Activated B cell treated with CpG ODN at 0.5 μM for 24 hours (primary cell): ENCODE measurements at regions of chr1 and their contacts with region 1.

Region 1: DNA sequence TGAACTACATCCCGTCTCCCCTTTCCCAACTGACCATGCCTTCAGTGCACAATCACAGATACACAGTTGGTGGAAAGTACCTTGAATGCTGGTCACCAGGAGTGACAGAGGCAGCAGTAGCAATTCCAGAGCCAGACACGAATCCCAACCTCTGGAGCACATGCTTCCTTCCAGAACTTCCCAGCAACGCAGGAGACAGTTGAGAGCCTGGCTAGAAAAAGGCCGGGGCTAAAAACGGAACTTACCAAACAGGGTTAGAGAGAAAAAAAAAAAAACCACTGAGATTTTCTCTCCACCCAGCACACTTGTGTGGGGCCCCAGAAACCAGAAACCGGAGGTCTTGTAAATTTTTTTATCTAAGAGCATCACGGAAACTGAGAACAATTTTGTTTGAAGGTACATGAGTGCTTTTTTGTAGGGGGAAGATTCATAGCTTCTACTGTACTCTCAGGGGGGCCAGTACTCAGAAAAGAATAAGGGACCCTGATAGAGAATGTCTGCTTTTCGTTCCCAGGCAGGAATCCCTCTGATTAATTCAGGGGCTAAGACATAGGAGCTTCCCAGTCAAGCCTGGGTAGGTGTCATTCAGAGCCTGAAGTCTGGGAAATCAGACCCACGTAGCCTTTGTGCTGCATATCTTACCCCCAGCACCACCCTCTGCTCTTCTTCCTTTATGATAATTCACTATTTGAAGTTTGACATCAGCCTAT is at the start of gene CD48:
- DNase-seq: no peak
- ATAC-seq: peak; percentile 58
- H3K4me3 Mint-ChIP-seq: no peak within 1 kb of the TSS
- H3K27ac Mint-ChIP-seq: no peak within 1 kb of the TSS
- H3K4me1 Mint-ChIP-seq: peaks cover 32% of the 10 kb centered on the region
- H3K27me3 Mint-ChIP-seq: no peaks in the 10 kb centered on the region
- CTCF ChIP-seq: no peak
- total RNA-seq, gene CD48: 200 and 202 TPM in 2 replicates

Region 2: DNA sequence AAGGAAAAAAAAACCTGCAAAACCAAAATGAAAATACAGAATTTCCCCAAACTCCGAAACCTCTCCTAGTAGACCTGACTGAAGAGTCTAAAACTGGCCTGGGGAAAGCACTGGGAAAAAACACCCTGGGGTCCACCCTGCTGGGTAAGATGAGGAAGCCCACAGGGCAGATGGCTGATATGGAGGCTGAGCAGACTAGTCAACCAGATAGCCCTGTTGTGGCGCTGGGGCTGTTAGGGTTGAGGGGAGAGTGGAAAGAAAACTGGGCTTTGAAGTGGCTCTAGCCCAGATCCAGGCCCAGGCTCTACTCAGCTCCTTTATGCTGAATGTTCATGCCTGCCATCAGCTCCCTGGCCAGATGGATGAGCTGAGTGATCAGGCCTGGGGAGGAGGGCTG is 58.1 kb before region 1 on chr1:
- CTCF ChIA-PET with region 1: no interaction called
- POLR2A ChIA-PET with region 1: interaction called, 10 read pairs
- intact Hi-C with region 1: no loop called
- DNase-seq: no peak
- ATAC-seq: peak; percentile 78
- H3K4me3 Mint-ChIP-seq: peak overlapping the region; percentile 65
- H3K27ac Mint-ChIP-seq: peak overlapping the region; percentile 93
- H3K4me1 Mint-ChIP-seq: peaks cover 92% of the 10 kb centered on the region
- H3K27me3 Mint-ChIP-seq: no peaks in the 10 kb centered on the region
- CTCF ChIP-seq: no peak

Region 3: DNA sequence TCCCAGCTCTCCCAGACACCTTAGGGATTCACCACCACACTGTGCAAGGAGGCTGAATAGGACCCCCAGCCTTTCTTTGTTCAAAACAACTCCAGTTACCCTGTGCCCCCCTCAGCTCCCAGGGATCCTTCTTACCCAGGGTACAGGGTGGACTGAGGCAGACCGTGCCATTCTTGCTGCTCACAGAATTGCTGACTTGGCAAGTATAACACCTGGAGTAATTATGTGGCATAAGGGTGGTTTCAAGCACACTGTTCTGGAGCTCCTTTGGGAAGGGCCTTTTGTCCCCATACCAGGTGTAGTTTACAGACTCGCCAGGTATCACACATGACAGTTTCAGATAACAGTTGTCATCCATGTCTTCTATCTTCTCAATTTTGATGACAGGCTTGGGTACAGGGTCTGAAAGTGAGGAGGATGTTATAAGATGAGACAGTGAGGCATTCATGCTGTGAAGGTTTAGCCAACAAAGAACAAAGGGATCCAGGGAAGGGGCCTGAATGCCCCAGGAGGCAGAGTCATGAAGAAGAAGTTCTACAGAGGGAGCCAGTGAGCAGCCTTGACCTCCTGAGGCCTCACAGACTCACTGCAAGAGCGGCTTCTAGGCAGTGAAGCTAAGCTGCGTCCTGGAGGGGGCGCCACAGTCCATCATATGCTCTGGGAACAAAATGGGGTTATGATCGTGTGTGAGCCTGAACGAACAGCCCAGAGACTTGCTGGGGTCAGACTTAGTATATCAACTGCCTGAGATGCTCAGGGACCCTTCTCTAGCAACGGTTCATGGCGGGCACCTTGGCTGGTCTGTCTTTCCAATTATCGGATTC is 30.5 kb before region 1 on chr1:
- CTCF ChIA-PET with region 1: interaction called, 46 read pairs
- POLR2A ChIA-PET with region 1: interaction called, 12 read pairs
- intact Hi-C with region 1: loop called (anchors 5 kb)
- DNase-seq: peak; percentile 67
- ATAC-seq: peak; percentile 89
- H3K4me3 Mint-ChIP-seq: no peak overlapping the region
- H3K27ac Mint-ChIP-seq: peak overlapping the region; percentile 79
- H3K4me1 Mint-ChIP-seq: peaks cover 52% of the 10 kb centered on the region
- H3K27me3 Mint-ChIP-seq: no peaks in the 10 kb centered on the region
- CTCF ChIP-seq: no peak

Region 4: DNA sequence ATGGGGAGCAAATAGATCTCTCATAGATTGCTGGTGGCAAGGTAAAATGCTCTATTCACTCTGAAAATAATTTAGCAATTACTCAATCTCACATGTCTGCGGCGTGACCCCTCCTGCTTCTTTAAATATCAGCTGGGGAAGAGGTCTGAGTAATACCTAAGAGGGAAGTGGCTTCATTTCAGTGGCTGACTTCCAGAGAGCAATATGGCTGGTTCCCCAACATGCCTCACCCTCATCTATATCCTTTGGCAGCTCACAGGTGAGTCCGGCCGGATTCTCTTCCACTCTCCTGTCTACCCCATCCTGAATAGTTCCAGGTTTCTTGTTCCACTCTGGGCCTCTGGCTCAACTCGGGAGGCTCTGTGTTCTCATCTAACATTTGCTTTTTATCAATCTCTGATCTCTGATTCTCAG is 27.3 kb after region 1 on chr1 and contains the start of gene SLAMF7:
- CTCF ChIA-PET with region 1: no interaction called
- POLR2A ChIA-PET with region 1: interaction called, 7 read pairs
- intact Hi-C with region 1: loop called (anchors 2 kb)
- DNase-seq: peak; percentile 32
- ATAC-seq: peak; percentile 94
- H3K4me3 Mint-ChIP-seq: peak within 1 kb of the TSS; percentile 88
- H3K27ac Mint-ChIP-seq: peak within 1 kb of the TSS; percentile 90
- H3K4me1 Mint-ChIP-seq: peaks cover 72% of the 10 kb centered on the region
- H3K27me3 Mint-ChIP-seq: no peaks in the 10 kb centered on the region
- CTCF ChIP-seq: no peak
- total RNA-seq, gene SLAMF7: 99.2 and 119 TPM in 2 replicates

Region 5: GRCh38 chr1:160806109-160806665 is 94.4 kb after region 1 on chr1:
- CTCF ChIA-PET with region 1: no interaction called
- POLR2A ChIA-PET with region 1: no interaction called
- intact Hi-C with region 1: no loop called
- DNase-seq: no peak
- ATAC-seq: no peak
- H3K4me3 Mint-ChIP-seq: no peak overlapping the region
- H3K27ac Mint-ChIP-seq: no peak overlapping the region
- H3K4me1 Mint-ChIP-seq: peaks cover 66% of the 10 kb centered on the region
- H3K27me3 Mint-ChIP-seq: no peaks in the 10 kb centered on the region
- CTCF ChIP-seq: no peak

Region 6: DNA sequence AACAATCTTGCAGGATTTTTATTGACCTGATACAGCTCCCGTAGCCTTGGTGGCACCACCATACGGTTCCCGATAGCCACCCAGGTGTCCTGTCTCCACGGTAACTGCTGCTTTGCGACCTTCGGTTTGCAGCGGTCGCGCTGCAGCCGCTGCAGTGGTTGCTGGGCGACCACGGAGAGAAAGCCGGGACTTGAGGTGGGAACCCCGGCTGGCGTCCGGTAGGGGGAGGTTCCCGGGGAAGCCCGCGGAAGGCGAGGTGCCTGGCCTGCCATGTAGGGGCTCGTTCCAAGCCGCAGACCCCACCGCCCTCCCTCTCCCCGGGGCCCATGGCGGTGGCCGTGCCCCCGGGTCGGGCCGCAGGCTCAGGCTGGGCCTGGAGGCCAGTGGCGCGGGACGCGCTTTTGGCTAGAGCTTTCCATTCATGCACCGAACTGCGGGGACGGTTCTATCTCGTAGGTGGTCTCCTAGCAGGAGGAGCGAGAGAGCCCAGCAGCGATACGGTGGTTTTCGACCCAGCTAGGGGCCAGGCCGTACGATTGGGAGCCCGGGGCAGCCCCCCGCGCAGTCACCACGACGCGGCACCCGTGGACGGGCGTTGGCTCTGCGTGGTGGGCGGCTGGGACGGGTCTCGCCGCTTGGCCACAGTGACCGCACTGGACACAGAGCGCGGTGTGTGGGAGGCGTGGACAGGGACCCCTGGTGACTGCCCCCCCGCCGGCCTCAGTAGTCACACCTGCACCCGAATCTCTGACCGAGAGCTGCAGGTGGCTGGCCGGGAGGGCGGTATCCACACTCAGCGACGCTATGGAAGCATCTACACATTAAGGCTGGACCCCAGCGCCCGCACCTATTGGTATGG is 386.7 kb after region 1 on chr1 and contains the start of gene KLHDC9:
- CTCF ChIA-PET with region 1: interaction called, 3 read pairs
- POLR2A ChIA-PET with region 1: no interaction called
- intact Hi-C with region 1: loop called (anchors 5 kb)
- DNase-seq: peak; percentile 77
- ATAC-seq: peak; percentile 79
- H3K4me3 Mint-ChIP-seq: peak within 1 kb of the TSS; percentile 88
- H3K27ac Mint-ChIP-seq: peak within 1 kb of the TSS; percentile 93
- H3K4me1 Mint-ChIP-seq: peaks cover 36% of the 10 kb centered on the region
- H3K27me3 Mint-ChIP-seq: no peaks in the 10 kb centered on the region
- CTCF ChIP-seq: peak; percentile 11
- total RNA-seq, gene KLHDC9: 2.9 and 3.6 TPM in 2 replicates